Activated CD8-positive, alpha-beta T cell treated with anti-CD3 and anti-CD28 coated beads for 36 hours (primary cell): ENCODE measurements at regions of chr21 and their contacts with region 1.

Region 1: GRCh38 chr21:17805966-17806365 is 13.2 kb downstream of the C21orf91 start:
- DNase-seq: no peak
- ATAC-seq: peak; percentile 14
- H3K4me3 Mint-ChIP-seq: no peak overlapping the region
- H3K27ac Mint-ChIP-seq: peak overlapping the region; percentile 75
- H3K4me1 Mint-ChIP-seq: peaks cover 51% of the 10 kb centered on the region
- H3K27me3 Mint-ChIP-seq: no peaks in the 10 kb centered on the region
- CTCF ChIP-seq: no peak

Region 2: DNA sequence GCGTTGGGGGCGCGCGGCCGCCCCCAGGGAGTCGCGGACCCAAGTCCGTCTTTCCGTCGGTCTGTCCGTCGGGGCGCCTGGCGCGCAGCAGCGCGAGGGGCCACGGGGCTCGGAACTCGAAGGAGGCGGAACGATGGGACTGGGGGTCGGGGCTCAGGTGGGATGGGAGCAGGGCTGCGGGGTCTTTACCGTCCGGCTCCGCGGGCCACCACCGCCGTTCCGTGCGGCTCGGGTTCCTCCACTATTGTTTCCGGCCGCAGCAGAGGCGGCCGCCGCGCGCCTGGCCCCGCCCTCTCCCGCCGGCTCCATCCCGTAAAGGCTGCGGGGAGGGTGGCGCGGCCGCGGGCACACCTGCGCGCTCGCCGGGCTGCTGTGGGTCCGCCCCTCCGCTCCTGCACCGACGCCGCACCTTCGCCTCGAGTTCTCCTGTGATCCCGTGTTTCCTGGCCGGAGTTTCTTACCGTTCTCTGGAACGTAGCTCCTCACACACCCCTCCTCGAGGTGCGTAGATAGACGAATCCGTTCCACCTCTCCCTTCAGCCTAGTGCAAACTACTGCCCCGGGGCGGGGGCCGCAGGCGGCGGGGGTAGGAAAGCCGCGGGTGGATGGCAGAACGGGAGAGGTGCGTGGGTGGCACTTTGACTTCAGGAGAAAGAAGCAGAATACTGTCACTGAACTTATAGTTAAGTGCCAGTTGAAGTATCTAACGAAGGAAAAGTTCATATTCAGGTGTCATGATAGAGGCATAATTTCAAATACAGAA is 13.3 kb after region 1 on chr21 and contains the start of gene C21orf91:
- CTCF ChIA-PET with region 1: interaction called, 5 read pairs
- POLR2A ChIA-PET with region 1: interaction called, 12 read pairs
- intact Hi-C with region 1: no loop called
- DNase-seq: peak; percentile 92
- ATAC-seq: peak; percentile 87
- H3K4me3 Mint-ChIP-seq: peak within 1 kb of the TSS; percentile 85
- H3K27ac Mint-ChIP-seq: peak within 1 kb of the TSS; percentile 99
- H3K4me1 Mint-ChIP-seq: peaks cover 36% of the 10 kb centered on the region
- H3K27me3 Mint-ChIP-seq: no peaks in the 10 kb centered on the region
- CTCF ChIP-seq: no peak
- total RNA-seq, gene C21orf91: 32.5 to 32.6 TPM